PC-9 (cell line): ENCODE measurements at regions of chr15 and their contacts with region 1.

Region 1: GRCh38 chr15:60520825-60521368 is 42.0 kb upstream of the ICE2 start:
- DNase-seq: peak; percentile 36 to 68
- H3K4me3 ChIP-seq: no peak overlapping the region
- H3K27ac ChIP-seq: peak overlapping the region; percentile 92
- H3K4me1 ChIP-seq: peaks cover 33% of the 10 kb centered on the region
- H3K27me3 ChIP-seq: no peaks in the 10 kb centered on the region
- CTCF ChIP-seq: peak; percentile 88

Region 2: GRCh38 chr15:59725172-59725486 is 795.8 kb before region 1 on chr15:
- CTCF ChIA-PET with region 1: interaction called, 3 read pairs
- POLR2A ChIA-PET with region 1: no interaction called
- intact Hi-C with region 1: loop called (anchors 10 kb)
- DNase-seq: no peak
- H3K4me3 ChIP-seq: no peak overlapping the region
- H3K27ac ChIP-seq: no peak overlapping the region
- H3K4me1 ChIP-seq: no peaks in the 10 kb centered on the region
- H3K27me3 ChIP-seq: no peaks in the 10 kb centered on the region
- CTCF ChIP-seq: no peak

Region 3: GRCh38 chr15:60278879-60279278 is 242.0 kb before region 1 on chr15:
- CTCF ChIA-PET with region 1: no interaction called
- POLR2A ChIA-PET with region 1: no interaction called
- intact Hi-C with region 1: no loop called
- DNase-seq: no peak
- H3K4me3 ChIP-seq: no peak overlapping the region
- H3K27ac ChIP-seq: no peak overlapping the region
- H3K4me1 ChIP-seq: no peaks in the 10 kb centered on the region
- H3K27me3 ChIP-seq: no peaks in the 10 kb centered on the region
- CTCF ChIP-seq: no peak

Region 4: DNA sequence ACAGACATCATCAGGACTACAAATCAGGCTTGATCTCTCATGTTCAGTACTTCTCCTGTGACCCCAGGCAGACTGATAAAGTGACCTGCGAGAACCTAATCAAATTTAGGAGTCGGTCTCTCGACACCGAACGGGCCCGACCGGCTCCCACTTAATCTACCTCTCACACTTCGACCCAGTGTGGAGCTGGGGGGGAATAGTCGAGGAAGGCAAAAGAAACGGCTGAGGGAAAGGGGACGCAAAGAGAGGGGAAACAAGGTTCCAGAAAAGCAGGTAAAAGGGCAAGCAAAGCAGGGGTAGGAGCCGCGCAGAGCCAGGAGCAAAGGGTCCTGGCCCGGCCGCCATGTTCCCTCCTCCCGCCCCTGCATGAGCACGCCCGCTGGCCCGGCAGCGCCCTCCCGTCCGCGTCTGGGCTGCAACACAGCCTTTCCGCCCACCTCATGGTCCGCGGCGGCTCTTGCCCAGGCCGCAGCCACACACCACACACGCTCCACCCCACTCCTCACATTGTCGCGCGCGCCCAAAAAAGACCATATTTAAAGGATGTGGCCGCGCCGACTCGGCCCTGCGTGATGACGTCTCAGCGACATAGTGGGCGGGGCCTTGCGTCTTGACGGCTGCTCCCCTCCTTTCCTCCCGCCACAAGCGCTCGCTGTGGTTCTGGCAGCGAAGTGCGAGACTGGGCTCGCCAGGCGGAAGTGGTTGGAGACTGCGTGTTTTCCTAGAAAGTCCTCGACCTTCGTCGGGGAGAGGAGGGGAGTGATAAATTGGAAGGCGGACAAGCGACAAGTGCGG is 42.1 kb before region 1 on chr15 and contains the start of gene ICE2:
- CTCF ChIA-PET with region 1: interaction called, 4 read pairs
- POLR2A ChIA-PET with region 1: interaction called, 3 read pairs
- intact Hi-C with region 1: loop called (anchors 1 kb)
- DNase-seq: peak; percentile 76 to 90
- H3K4me3 ChIP-seq: peak within 1 kb of the TSS; percentile 66
- H3K27ac ChIP-seq: peak within 1 kb of the TSS; percentile 51
- H3K4me1 ChIP-seq: peaks cover 25% of the 10 kb centered on the region
- H3K27me3 ChIP-seq: no peaks in the 10 kb centered on the region
- CTCF ChIP-seq: no peak
- total RNA-seq, gene ICE2: 64.1 and 67.5 TPM in 2 replicates